Heart right ventricle (tissue), 16 donors: ENCODE measurements at regions of chr12 and their contacts with region 1.

Region 1: GRCh38 chr12:115752913-115753726 is 524.4 kb downstream of the MED13L start:
- DNase-seq: peak in 1 of 2 donors; percentile 59
- ATAC-seq: peak; percentile 81 to 96 (median 94)
- H3K4me3 ChIP-seq: no peak overlapping the region
- H3K27ac ChIP-seq: peak overlapping the region in 2 of 10 donors; percentile 1 to 9
- H3K4me1 ChIP-seq: peaks cover 0 to 34% (median 16%) of the 10 kb centered on the region in 9 donors
- H3K27me3 ChIP-seq: peaks cover 0 to 46% (median 29%) of the 10 kb centered on the region in 7 donors
- CTCF ChIP-seq: peak; percentile 49 to 81 (median 72)

Region 2: DNA sequence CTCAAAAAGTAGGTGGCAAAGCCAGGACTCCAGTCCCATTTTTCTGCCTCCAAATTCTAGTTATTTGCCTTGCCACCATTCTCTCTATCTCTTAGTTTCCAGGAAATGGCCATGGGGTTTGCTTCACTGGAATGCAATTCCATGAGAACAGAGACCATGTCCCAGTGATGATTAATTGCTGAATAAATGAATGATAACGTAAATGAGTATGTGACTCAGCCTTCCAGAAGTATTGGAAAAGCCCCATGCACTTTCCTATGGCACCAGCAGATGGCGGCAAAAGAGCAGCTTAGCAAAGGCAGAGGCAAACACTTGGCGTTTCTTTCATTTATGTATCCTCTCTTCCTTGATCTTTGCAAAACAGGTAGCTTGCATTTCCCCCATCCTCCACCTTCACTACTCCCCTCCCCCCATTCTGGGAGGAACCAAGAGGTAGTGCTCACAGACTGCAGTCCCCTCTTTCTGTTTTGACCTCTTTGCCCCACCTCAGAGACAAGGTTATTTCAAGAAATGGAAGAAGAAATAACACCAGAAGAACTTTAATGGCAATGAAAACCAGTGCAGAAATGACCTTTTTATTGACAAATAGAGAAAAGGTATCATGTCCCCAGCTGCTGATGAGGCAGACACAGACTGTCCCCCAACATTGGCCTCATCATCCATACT is 1090.5 kb before region 1 on chr12:
- intact Hi-C with region 1: loop called in 7 of 10 experiments (anchors 2 to 5 kb)
- DNase-seq: peak; percentile 72 to 73
- ATAC-seq: peak in 3 of 8 donors; percentile 46 to 50 (median 49)
- H3K4me3 ChIP-seq: no peak overlapping the region
- H3K27ac ChIP-seq: no peak overlapping the region
- H3K4me1 ChIP-seq: peaks cover 0 to 19% (median 13%) of the 10 kb centered on the region in 9 donors
- H3K27me3 ChIP-seq: peaks cover 6 to 78% (median 61%) of the 10 kb centered on the region in 7 donors
- CTCF ChIP-seq: peak in 8 of 9 donors; percentile 87 to 99 (median 96)

Region 3: GRCh38 chr12:115172521-115172920 is 580.6 kb before region 1 on chr12:
- intact Hi-C with region 1: loop called in 1 of 10 experiments (anchors 10 kb)
- DNase-seq: no peak
- ATAC-seq: no peak
- H3K4me3 ChIP-seq: no peak overlapping the region
- H3K27ac ChIP-seq: no peak overlapping the region
- H3K4me1 ChIP-seq: no peaks in the 10 kb centered on the region
- H3K27me3 ChIP-seq: peaks cover 0 to 2% (median 0%) of the 10 kb centered on the region in 7 donors
- CTCF ChIP-seq: no peak

Region 4: DNA sequence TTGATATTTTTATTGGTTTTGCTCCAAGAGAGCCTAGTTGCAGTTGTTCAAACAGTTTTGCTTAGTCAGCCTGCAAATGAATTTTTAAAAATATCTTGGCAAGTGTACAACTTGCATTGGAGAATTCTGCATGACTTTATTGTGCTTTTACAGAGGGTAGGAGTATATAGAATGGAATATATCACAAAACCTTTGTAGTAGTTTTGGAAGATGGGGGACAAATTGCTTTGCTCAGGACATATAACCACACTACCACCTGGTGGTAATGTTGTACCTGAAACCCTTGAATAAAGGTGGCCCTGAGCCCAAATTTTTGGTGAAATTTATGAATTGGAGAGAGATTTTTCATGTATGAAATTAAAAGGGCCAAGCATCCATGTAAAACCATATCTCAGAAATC is 120.8 kb before region 1 on chr12:
- intact Hi-C with region 1: loop called in 3 of 10 experiments (anchors 5 to 10 kb)
- DNase-seq: no peak
- ATAC-seq: no peak
- H3K4me3 ChIP-seq: no peak overlapping the region
- H3K27ac ChIP-seq: no peak overlapping the region
- H3K4me1 ChIP-seq: peaks cover 0 to 9% (median 0%) of the 10 kb centered on the region in 9 donors
- H3K27me3 ChIP-seq: no peaks in the 10 kb centered on the region
- CTCF ChIP-seq: peak in 7 of 9 donors; percentile 20 to 58 (median 41)

Region 5: DNA sequence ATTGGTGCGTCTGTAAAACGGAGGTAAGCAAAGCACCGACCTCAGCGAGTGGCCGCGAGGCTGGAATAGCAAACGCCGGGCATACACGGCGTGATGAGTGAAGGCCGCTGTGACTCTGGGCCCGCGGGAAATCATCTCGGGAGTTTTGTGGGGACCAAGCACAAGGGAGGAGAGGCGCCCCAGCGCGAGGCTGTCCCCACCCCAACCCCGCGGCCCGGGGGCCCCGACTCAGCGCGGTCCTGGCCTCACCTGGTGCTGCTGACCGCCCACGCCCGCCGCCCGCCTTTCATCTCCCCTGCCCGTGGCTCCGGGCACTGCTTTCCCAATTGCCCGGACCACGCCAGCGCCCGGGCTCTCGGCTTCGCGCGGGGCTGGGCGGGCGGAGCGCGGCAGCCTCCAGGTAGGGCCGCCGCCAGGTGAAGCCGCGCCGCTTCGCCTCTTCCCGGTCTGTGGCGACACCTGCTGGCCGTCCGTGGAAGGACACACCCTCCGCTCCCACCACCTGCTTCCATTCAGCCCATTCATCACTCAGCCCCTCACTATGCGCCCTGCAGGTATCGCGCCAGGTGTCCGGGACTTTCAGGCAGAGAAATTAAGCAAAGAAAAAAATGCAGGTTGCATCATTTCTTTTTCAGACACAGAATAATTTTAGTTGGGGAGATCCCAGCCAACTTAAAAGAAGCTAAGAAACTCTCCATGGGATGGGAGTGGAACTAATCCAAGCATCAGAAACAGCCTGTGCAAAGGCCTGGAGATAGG is 164.0 kb after region 1 on chr12:
- intact Hi-C with region 1: loop called in 6 of 10 experiments (anchors 5 to 10 kb)
- DNase-seq: peak; percentile 37 to 68
- ATAC-seq: peak; percentile 53 to 81 (median 67)
- H3K4me3 ChIP-seq: peak overlapping the region in 1 of 10 donors; percentile 8
- H3K27ac ChIP-seq: no peak overlapping the region
- H3K4me1 ChIP-seq: peaks cover 0 to 4% (median 3%) of the 10 kb centered on the region in 9 donors
- H3K27me3 ChIP-seq: peaks cover 0 to 62% (median 50%) of the 10 kb centered on the region in 7 donors
- CTCF ChIP-seq: peak; percentile 88 to 98 (median 96)